Calu3 (cell line): ENCODE measurements at regions of chr7 and their contacts with region 1.

Region 1: DNA sequence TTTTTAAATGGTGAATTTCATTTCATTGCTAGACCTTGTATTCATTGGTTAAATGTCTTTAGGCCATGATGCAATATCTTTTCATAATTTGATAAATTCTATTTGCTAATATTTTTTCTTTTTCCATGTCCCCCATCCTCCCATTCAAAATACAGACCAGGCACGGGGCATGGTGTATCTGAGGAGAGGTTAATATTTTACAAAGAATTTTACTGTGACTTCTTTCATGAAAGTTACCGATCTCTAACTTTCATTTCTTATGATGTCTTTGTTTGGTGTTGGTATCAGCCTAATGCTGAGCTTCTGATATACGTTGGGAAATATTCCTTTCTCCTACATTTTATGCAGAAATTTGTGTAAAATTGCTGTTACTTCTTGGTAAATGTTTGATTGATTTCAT is 216.7 kb upstream of the IGFBP3 start:
- DNase-seq: no peak
- H3K4me3 Mint-ChIP-seq: no peak overlapping the region
- H3K27ac Mint-ChIP-seq: no peak overlapping the region
- H3K4me1 Mint-ChIP-seq: peaks cover 23% of the 10 kb centered on the region
- H3K27me3 Mint-ChIP-seq: no peaks in the 10 kb centered on the region
- CTCF ChIP-seq: no peak

Region 2: DNA sequence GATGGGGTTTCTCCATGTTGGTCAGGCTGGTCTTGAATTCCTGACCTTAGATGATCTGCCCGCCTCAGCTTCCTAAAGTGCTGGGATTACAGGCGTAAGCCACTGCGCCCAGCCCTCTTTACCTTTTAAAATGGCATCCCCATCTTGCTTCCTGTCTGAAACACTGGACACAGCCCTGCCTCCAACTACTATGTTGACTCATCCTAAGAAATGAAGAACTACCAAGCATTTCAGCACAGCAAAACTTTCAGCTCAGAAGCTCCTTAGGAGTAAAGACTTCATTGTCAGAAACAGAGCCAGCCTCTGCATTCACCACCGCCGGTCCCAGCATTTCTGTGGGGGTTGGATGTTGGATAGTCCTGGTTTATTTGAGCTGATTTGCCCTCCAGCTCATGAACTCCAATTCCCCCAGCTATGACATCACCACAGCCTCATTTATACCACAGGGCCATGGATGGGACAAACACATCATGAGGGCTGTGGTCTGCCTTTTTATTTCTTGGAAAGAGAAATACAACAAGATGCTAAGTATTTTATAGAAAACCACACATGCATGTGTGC is 440.1 kb before region 1 on chr7:
- CTCF ChIA-PET with region 1: no interaction called
- intact Hi-C with region 1: no loop called
- DNase-seq: no peak
- H3K4me3 Mint-ChIP-seq: no peak overlapping the region
- H3K27ac Mint-ChIP-seq: no peak overlapping the region
- H3K4me1 Mint-ChIP-seq: no peaks in the 10 kb centered on the region
- H3K27me3 Mint-ChIP-seq: peaks cover 47% of the 10 kb centered on the region
- CTCF ChIP-seq: no peak

Region 3: DNA sequence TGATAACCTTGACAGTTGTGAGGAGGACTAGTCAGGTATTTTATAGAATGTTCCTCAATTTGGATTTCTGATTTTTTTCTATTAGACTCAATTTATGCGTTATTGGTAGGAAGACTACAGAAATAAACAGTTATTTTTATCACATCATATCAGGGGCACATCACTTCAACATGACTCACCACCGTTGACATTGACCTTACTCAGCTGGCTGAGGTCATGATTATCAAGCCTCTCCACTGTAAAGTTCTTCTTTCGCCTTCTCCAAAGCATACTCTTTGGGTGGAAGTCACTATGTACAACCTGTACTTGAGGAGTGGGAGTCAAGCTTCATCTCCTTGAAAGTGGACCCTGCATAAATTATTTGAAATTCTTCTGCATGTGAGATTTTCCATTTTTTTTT is 22.3 kb before region 1 on chr7:
- CTCF ChIA-PET with region 1: interaction called, 3 read pairs
- intact Hi-C with region 1: loop called (anchors 1 kb)
- DNase-seq: no peak
- H3K4me3 Mint-ChIP-seq: no peak overlapping the region
- H3K27ac Mint-ChIP-seq: no peak overlapping the region
- H3K4me1 Mint-ChIP-seq: no peaks in the 10 kb centered on the region
- H3K27me3 Mint-ChIP-seq: no peaks in the 10 kb centered on the region
- CTCF ChIP-seq: no peak